Endothelial cell of umbilical vein (primary cell): ENCODE measurements at regions of chr14 and their contacts with region 1.

Region 1: GRCh38 chr14:55731881-55732498 is 152.0 kb downstream of the KTN1 start:
- DNase-seq: peak; percentile 46
- H3K4me3 ChIP-seq: no peak overlapping the region
- H3K27ac ChIP-seq: no peak overlapping the region
- H3K4me1 ChIP-seq: no peaks in the 10 kb centered on the region
- H3K27me3 ChIP-seq: no peaks in the 10 kb centered on the region
- CTCF ChIP-seq: peak; percentile 52 to 58
- POLR2A ChIP-seq: no peak

Region 2: GRCh38 chr14:55743551-55743950 is 11.6 kb after region 1 on chr14:
- CTCF ChIA-PET with region 1: interaction called, 14 read pairs
- POLR2A ChIA-PET with region 1: no interaction called
- dilution Hi-C with region 1: no loop called
- intact Hi-C with region 1: no loop called
- DNase-seq: no peak
- H3K4me3 ChIP-seq: no peak overlapping the region
- H3K27ac ChIP-seq: no peak overlapping the region
- H3K4me1 ChIP-seq: no peaks in the 10 kb centered on the region
- H3K27me3 ChIP-seq: no peaks in the 10 kb centered on the region
- CTCF ChIP-seq: no peak
- POLR2A ChIP-seq: no peak

Region 3: DNA sequence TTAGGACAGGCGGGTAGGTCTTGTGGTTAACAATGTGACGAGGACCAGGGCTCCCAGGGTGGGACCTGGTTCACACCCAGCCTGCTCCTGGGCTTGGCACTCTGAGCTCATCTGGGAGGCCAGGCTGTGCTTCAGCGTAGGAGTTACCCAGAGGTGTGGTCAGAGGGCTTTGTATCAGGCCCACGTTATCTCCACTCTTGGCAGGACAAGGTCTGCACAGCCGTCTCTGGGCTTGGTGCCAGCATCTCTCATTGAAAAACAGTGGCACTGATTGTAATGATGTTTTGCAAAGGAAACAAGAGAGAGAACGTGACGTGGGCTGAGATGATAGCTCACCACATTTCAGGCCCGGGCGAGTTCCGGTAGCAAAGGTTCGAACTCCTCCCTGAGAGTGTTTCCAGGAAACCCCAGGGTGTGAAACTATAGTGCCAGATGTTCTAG is 75.1 kb after region 1 on chr14:
- CTCF ChIA-PET with region 1: interaction called, 10 read pairs
- POLR2A ChIA-PET with region 1: no interaction called
- dilution Hi-C with region 1: no loop called
- intact Hi-C with region 1: no loop called
- DNase-seq: peak; percentile 98
- H3K4me3 ChIP-seq: no peak overlapping the region
- H3K27ac ChIP-seq: peak overlapping the region; percentile 82
- H3K4me1 ChIP-seq: peaks cover 33% of the 10 kb centered on the region
- H3K27me3 ChIP-seq: no peaks in the 10 kb centered on the region
- CTCF ChIP-seq: no peak
- POLR2A ChIP-seq: no peak

Region 4: DNA sequence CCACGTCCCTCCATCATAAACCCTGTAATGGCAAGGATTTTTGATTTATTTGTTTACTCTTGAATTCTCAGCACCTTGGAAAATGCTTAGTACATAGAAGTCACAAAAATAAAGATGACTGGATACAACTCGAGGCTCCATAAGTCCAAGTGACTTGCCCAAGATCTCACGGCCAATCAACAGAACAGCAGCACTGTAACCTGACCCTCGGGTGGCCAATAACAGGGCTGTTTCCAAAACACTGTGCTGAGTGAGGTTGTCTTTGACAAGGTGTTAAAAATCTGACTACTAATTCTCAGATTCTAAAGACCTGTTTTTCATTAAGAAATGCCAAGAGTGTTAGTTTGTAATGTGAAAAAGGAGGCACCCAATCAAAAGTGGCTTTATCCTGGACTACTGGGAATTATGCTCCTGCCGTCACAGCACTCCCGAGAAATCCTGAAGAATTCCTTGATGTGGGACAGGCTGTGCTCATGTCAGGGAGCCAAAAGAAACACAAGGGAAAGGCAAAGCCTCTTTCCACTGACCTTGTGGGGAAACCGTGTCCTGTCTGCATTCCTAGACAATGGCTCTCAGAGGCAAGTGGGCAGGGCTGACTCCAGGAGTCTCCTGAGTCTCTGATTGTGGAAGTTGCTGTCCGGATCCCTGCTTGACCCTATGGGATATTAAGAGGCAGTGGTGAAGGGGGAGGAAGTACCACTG is 181.5 kb after region 1 on chr14:
- CTCF ChIA-PET with region 1: no interaction called
- POLR2A ChIA-PET with region 1: no interaction called
- dilution Hi-C with region 1: no loop called
- intact Hi-C with region 1: loop called (anchors 5 kb)
- DNase-seq: peak; percentile 88
- H3K4me3 ChIP-seq: no peak overlapping the region
- H3K27ac ChIP-seq: peak overlapping the region; percentile 60
- H3K4me1 ChIP-seq: peaks cover 11% of the 10 kb centered on the region
- H3K27me3 ChIP-seq: peaks cover 0 to 2% of the 10 kb centered on the region in 2 experiments
- CTCF ChIP-seq: no peak
- POLR2A ChIP-seq: no peak

Region 5: GRCh38 chr14:56474419-56475022 is 742.5 kb after region 1 on chr14:
- CTCF ChIA-PET with region 1: interaction called, 100 read pairs
- POLR2A ChIA-PET with region 1: no interaction called
- dilution Hi-C with region 1: no loop called
- intact Hi-C with region 1: loop called (anchors 1 kb)
- DNase-seq: peak; percentile 54
- H3K4me3 ChIP-seq: no peak overlapping the region
- H3K27ac ChIP-seq: no peak overlapping the region
- H3K4me1 ChIP-seq: no peaks in the 10 kb centered on the region
- H3K27me3 ChIP-seq: peaks cover 0 to 8% of the 10 kb centered on the region in 2 experiments
- CTCF ChIP-seq: peak; percentile 63 to 64
- POLR2A ChIP-seq: no peak